Natural killer cell (primary cell): ENCODE measurements at regions of chr10 and their contacts with region 1.

Region 1: DNA sequence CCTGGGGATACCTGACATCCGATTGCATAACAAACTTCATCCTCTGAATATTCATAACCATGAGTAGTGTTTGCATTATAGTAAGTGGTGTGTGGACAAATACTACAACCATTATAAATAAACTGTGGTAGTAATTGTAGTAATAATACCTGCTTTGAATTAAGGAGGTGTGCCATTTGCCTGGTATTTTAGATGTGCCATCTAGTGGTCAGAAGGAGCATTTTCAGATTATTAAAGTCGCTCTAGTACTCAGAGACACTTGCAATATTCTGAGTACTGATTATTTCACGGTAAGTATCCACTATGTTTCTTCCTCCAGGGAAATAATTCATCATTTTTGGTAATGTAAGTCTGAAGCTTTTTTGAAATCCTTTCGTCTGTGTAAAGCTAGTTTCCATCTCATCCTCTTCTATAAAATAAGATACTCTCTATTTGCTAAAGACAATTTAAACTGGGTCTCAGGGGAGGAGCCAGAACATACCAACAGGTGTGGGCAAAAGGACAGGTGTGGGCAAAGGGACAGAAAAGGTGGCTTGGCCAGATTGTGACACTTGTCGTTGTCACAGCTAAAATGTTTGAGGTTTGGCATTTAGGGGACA is 115.3 kb upstream of the WDR11 start:
- DNase-seq: peak in 1 of 2 donors; percentile 27
- ATAC-seq: peak in 2 of 3 donors; percentile 51 to 69
- H3K4me3 ChIP-seq: no peak overlapping the region
- H3K4me3 Mint-ChIP-seq: no peak overlapping the region
- H3K27ac ChIP-seq: no peak overlapping the region
- H3K27ac Mint-ChIP-seq: no peak overlapping the region
- H3K4me1 ChIP-seq: no peaks in the 10 kb centered on the region
- H3K4me1 Mint-ChIP-seq: peaks cover 4 to 7% of the 10 kb centered on the region in 2 donors
- H3K27me3 ChIP-seq: no peaks in the 10 kb centered on the region
- H3K27me3 Mint-ChIP-seq: peaks cover 8 to 19% of the 10 kb centered on the region in 2 donors
- CTCF ChIP-seq: peak; percentile 90

Region 2: DNA sequence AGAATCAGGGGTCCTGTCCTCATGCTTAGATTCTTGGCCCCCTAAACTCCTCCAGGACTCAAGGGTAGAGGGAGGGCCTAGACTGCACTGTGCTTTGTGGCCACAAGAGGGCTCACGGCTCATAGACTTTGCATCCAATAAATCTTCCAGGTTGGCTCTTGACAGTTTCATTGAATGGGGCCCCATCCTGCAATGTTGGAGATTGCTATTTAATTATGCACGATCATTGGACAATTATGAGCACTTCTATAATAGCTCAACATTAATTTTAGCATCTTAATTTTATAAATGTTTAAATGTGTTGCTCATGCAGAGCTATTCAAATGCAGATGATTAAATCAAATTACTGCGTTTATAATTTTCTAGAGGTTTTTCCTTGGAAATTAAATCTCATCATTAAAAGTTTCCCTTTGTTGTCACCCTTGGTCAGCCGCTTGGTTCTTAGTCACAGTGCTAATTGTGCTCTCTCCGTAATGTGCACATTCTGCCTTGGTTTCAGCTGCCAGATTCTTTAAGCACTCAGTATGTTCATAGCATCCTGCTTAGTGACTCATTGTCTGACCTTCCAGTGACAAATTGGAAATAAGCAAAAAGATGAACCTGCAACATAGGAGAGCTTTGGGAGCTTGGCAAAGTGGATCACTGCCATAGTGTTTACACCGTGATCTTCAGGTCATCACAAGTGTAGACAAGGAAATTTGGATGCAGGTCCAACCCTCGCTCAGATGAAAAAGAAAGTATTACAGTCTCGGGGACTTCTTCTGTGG is 312.3 kb before region 1 on chr10:
- intact Hi-C with region 1: loop called (anchors 1 kb)
- DNase-seq: peak; percentile 29 to 36
- ATAC-seq: peak; percentile 50 to 82 (median 54)
- H3K4me3 ChIP-seq: no peak overlapping the region
- H3K4me3 Mint-ChIP-seq: no peak overlapping the region
- H3K27ac ChIP-seq: no peak overlapping the region
- H3K27ac Mint-ChIP-seq: no peak overlapping the region
- H3K4me1 ChIP-seq: no peaks in the 10 kb centered on the region
- H3K4me1 Mint-ChIP-seq: no peaks in the 10 kb centered on the region
- H3K27me3 ChIP-seq: no peaks in the 10 kb centered on the region
- H3K27me3 Mint-ChIP-seq: peaks cover 7 to 16% of the 10 kb centered on the region in 2 donors
- CTCF ChIP-seq: peak; percentile 86